ENCODE measurements at regions of chr2 and their contacts with region 1.

Region 1: DNA sequence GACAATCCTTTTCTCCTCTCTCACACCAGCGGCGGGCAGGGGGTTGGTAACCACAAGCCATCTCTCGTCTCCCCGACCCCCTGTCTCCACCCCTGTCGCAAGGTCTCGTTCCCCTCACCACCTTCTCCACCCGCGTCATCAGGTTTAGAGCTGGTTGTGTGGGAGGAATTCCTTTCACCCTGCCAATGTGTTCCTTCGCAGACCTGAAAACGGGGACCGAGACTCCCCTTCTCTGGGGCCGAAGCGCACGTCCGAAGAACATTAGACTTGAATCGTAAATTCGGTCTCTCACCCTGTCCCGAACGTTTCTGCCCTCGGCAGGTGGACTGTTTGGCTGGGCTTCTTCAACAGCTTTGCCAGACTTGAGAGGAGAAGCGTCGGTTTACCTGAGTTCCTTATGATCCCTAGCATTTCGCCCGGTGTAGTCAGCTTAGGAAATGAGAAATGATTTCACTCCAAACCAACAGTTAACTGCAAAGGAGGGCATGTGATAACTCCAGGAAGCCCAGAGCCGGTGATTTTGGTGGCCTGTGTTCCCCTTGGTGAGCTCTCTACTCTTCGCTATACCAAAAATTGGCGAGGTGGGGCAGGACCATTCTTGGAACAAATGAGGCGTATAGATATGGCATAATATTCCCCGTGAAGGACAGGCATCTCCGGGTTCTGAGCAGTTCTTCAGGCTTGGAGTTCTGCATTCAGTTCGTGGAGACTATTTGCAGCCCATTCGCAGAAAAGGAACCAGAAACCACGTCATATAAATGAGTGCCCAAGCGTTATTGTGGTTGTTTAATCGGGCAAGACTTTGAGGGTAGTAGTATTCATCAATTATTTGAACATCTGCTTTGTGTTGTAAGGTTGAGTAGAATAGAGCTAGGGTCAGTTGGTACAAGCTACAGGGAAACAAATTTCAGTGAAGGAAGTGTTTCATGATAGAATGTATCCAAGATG is 694 bp downstream of the CFAP36 start:
- DNase-seq: peak in 1 of 5 donors; percentile 16
- ATAC-seq: peak in 3 of 4 donors; percentile 3 to 29 (median 27)
- H3K4me3 ChIP-seq: peak overlapping the region; percentile 66 to 90 (median 80)
- H3K27ac ChIP-seq: peak overlapping the region; percentile 29 to 90 (median 78)
- H3K4me1 ChIP-seq: peaks cover 0 to 18% (median 7%) of the 10 kb centered on the region in 12 donors
- H3K27me3 ChIP-seq: no peaks in the 10 kb centered on the region
- CTCF ChIP-seq: no peak
- POLR2A ChIP-seq: no peak

Region 2: DNA sequence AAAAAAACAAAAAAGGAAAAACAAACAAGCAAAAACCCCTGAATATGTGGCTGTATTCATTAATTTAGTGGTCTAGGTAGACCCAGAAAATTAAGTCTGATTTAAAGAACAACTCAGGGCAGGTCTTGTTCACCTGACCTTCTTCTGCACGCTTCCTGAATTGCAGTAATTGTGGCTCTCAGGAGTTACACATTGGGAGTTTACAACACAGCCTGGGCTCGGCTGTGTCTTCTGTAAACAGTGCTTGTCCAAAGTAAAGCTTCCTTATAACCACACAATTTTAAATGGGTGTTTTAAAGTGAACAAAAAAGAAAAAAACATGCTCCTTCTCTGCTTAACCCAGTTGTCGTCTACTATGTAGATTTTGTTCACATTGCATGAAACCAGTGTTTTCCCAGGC is 242.9 kb before region 1 on chr2:
- intact Hi-C with region 1: loop called in 3 of 10 experiments (anchors 10 kb)
- DNase-seq: no peak
- ATAC-seq: no peak
- H3K4me3 ChIP-seq: no peak overlapping the region
- H3K27ac ChIP-seq: no peak overlapping the region
- H3K4me1 ChIP-seq: peaks cover 0 to 6% (median 0%) of the 10 kb centered on the region in 12 donors
- H3K27me3 ChIP-seq: no peaks in the 10 kb centered on the region
- CTCF ChIP-seq: no peak
- POLR2A ChIP-seq: no peak

Region 3: DNA sequence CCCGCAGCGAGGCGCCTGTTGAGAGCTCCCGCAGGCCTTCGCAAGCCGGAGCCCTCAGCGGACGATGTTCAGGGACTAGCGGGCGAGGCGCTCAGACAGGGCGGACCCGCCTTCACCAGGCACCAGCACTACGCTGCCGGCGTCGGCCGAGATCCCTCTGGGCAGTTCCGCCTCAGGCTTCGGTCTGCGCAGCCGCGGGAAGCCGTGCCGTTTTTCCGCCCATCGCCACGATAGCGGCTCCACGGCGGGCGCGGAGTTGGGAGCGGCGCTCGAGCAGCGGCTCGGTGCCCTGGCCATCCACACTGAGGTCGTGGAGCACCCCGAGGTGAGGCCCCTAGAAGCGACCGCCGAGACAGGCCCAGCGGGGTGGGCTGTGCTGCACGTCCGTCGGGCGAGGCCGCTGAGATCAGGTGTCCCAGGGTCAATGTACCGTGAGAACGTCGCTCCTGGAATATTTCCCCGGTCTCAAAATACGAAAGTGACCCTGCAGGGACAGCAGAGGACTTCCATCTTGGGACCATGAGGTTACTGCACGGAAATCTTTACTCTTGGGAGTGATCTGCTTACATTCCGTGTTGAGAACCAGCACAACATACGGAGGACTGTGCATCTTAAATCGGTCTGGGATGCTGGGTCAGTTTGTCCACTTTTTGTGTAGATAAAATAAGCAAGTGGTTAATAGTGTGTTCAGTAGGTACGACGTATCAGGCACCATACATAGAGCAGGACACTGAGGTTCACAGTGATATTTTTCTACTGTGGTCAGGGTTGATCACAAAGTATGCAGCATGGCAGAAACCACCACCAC is 237.9 kb before region 1 on chr2:
- intact Hi-C with region 1: loop called in 3 of 10 experiments (anchors 10 kb)
- DNase-seq: peak; percentile 88 to 97 (median 95)
- ATAC-seq: peak; percentile 91 to 98 (median 98)
- H3K4me3 ChIP-seq: peak overlapping the region; percentile 43 to 96 (median 77)
- H3K27ac ChIP-seq: peak overlapping the region; percentile 83 to 98 (median 92)
- H3K4me1 ChIP-seq: peaks cover 0 to 25% (median 14%) of the 10 kb centered on the region in 12 donors
- H3K27me3 ChIP-seq: no peaks in the 10 kb centered on the region
- CTCF ChIP-seq: peak in 1 of 12 donors; percentile 15
- POLR2A ChIP-seq: peak in 1 of 2 donors; percentile 80

Region 4: DNA sequence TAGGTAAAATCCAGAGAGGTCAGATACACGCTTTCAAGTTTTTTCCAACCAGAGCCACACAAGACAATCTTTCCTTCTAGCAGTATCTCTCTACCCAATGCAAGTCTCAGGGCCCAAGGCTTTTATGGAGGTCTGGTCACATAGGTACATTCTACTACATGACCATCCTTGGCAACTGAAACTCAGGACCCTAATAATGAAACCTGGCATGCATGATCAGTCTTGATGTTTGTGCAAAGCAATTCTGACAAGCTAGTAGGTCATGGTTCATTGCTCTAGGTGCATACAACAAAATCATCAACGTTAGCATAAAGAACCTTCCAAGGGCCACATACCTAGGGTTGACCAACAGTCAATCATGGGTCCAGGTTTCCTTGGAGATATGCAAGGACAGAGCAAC is 67.3 kb before region 1 on chr2:
- intact Hi-C with region 1: no loop called
- DNase-seq: no peak
- ATAC-seq: no peak
- H3K4me3 ChIP-seq: no peak overlapping the region
- H3K27ac ChIP-seq: no peak overlapping the region
- H3K4me1 ChIP-seq: no peaks in the 10 kb centered on the region
- H3K27me3 ChIP-seq: no peaks in the 10 kb centered on the region
- CTCF ChIP-seq: no peak
- POLR2A ChIP-seq: no peak

Region 5: DNA sequence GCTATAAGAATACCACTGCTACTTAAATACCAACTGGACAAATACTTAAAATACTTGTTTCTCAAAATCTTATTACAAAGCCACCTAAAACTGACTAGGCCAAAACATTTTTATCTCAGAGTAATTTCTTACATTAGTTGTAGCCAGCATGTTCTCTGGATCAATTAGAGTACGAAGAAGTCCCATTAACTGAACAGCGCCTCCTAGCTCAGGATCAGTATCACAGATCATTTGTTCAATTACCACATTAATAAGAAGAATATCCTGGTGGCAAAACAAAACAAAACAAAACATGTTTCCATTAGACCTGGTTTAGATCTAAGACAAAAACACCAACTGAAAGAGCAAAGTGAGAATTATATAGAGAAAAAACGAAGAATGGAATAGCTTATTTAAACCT is 61.2 kb after region 1 on chr2:
- intact Hi-C with region 1: no loop called
- DNase-seq: no peak
- ATAC-seq: no peak
- H3K4me3 ChIP-seq: no peak overlapping the region
- H3K27ac ChIP-seq: no peak overlapping the region
- H3K4me1 ChIP-seq: peaks cover 0 to 32% (median 8%) of the 10 kb centered on the region in 12 donors
- H3K27me3 ChIP-seq: no peaks in the 10 kb centered on the region
- CTCF ChIP-seq: peak in 1 of 12 donors; percentile 20
- POLR2A ChIP-seq: no peak

Region 6: DNA sequence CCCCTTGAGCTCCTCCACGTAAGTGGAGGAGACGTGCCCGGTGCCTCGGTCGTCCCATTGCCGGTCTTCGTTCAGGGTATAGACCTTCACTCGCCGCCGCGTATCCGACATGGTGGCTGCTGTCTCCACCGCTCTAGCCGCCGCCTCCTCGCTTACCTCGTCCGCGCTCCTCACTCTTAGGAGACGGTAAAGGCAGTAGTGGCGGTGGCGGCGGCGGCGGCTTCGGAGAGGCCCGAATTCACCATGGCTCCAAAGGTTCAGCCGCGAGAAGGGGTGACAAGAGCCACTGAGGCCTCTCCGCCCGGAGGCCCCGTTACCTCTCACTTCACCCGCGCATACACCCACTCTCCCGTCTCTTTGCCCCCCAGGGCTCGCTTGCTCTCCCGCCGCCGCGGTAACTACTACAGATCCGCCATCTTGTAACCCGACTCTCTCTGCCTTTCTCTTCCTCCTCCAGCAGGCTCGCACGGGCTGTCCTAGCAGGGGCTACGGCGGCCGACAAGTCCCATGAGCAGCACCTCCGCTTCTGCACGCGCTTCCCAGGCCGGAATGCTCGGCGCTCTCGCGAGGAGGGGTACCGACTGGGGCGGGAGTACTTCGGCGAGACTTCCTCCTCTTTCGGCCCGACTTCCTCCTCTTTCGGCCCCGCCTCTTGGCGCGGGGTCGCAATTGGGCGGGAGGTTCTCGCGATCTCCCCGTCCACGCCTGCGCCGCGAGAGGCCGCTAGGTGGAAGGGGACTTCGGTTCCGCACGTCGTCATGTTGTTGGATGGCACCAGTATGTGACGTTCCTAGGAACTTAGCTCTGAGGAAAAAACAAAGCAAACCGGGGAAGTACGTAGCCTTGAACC is 97.2 kb after region 1 on chr2 and contains the start of gene PPP4R3B:
- intact Hi-C with region 1: loop called in 3 of 10 experiments (anchors 1 to 10 kb)
- DNase-seq: peak; percentile 100
- ATAC-seq: peak; percentile 95 to 97 (median 96)
- H3K4me3 ChIP-seq: peak within 1 kb of the TSS; percentile 66 to 98 (median 92)
- H3K27ac ChIP-seq: peak within 1 kb of the TSS; percentile 90 to 98 (median 97)
- H3K4me1 ChIP-seq: peaks cover 8 to 56% (median 32%) of the 10 kb centered on the region in 12 donors
- H3K27me3 ChIP-seq: no peaks in the 10 kb centered on the region
- CTCF ChIP-seq: peak; percentile 31 to 68 (median 52)
- POLR2A ChIP-seq: peak; percentile 64 to 94
- total RNA-seq, gene PPP4R3B: 21.0 to 32.4 (median 23.5) TPM

Measured in heart left ventricle (tissue), 16 donors.